ENCODE measurements at regions of chr5 and their contacts with region 1.

Region 1: DNA sequence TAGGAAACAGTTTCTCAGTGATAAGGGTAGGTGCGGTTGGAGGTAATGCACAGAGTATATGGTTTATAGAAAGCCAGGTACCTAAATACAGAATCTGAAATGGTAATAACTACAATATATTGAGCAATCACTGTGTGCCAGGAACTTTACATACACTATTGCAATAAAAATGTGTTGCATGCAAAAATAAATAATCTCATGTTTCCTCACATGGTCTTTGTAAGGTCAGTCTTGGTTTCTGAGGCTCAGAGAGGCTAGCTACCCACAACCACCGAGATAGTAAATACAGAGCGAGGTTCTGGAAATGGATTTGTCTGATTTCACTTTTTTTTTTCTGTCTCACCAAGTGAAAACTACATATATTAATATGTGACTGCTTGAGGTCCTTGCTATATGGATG is 128.9 kb downstream of the CAMK4 start:
- DNase-seq: no peak
- ATAC-seq: no peak
- H3K4me3 ChIP-seq: no peak overlapping the region
- H3K27ac ChIP-seq: no peak overlapping the region
- H3K4me1 ChIP-seq: no peaks in the 10 kb centered on the region
- H3K27me3 ChIP-seq: no peaks in the 10 kb centered on the region
- CTCF ChIP-seq: no peak
- EP300 ChIP-seq: no peak
- POLR2A ChIP-seq: no peak
- RAD21 ChIP-seq: no peak

Region 2: DNA sequence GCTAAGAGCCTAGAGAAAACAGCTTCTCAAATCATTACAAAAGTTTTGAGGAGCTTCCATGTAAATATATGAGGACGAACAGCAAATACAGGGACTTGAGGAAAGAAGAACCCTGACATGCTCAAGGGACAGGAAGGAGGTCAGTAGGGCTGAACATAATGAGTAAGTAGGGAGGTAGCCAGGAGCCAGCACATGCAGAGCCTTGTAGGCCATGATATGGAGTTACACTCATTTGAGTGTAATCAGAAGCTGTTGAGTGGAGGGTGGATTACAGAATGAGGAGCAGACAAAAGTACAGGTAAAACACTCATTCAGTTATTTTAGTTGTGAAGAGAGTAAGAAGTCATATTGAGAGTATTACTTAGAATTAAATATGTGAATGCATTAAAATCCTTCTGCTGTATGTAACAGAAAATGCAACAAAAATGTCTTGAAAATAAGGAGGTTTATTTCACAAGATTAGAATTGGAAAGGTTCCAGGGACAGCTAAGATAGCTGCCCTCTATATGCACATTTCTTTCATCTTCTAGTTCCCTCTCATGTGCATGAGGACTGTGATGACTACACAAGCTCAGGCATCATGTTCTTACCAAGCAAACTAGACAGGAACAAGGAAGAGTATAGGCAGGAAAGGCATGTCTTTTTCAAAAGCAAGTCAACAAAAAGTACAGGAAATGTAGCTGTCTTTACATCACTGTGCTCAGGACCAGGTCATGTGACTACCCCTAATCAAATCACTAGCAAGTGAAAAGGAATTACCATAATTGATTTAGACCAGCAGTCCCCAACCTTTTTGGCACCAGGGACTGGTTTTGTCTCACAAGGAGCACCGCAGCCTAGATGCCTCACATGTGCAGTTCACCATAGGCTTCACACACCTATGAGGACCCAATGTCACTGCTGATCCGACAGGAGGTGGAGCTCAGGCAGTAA is 713.8 kb before region 1 on chr5:
- CTCF ChIA-PET with region 1: no interaction called
- POLR2A ChIA-PET with region 1: no interaction called
- in situ Hi-C with region 1: no loop called
- intact Hi-C with region 1: no loop called
- DNase-seq: no peak
- ATAC-seq: no peak
- H3K4me3 ChIP-seq: no peak overlapping the region
- H3K27ac ChIP-seq: no peak overlapping the region
- H3K4me1 ChIP-seq: no peaks in the 10 kb centered on the region
- H3K27me3 ChIP-seq: no peaks in the 10 kb centered on the region; a peak in 1 of 5 replicates
- CTCF ChIP-seq: no peak
- EP300 ChIP-seq: no peak
- POLR2A ChIP-seq: no peak
- RAD21 ChIP-seq: no peak

Region 3: DNA sequence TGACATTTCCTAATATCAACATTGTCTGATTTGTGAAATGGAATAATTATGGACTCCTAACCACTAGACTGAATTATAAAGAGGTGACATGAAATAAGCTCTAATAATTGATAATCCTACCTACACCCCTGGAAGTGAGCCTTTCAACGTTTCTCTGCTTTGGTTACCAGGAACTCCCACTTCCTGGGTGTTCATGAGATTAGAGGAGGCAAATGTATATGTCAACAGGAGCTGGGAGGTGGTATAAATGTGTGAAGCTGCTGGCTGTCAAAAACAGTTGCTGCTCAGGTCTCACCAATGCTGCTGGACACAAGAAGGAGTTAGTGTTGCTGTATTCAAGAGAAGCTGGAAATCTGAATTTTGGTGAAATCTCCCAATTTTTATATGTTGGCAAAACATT is 32.1 kb before region 1 on chr5:
- CTCF ChIA-PET with region 1: no interaction called
- POLR2A ChIA-PET with region 1: no interaction called
- in situ Hi-C with region 1: no loop called
- intact Hi-C with region 1: loop called (anchors 1 kb)
- DNase-seq: no peak
- ATAC-seq: no peak
- H3K4me3 ChIP-seq: no peak overlapping the region
- H3K27ac ChIP-seq: no peak overlapping the region
- H3K4me1 ChIP-seq: no peaks in the 10 kb centered on the region
- H3K27me3 ChIP-seq: no peaks in the 10 kb centered on the region
- CTCF ChIP-seq: no peak
- EP300 ChIP-seq: no peak
- POLR2A ChIP-seq: no peak
- RAD21 ChIP-seq: no peak

Region 4: GRCh38 chr5:111364992-111365391 is 12.0 kb after region 1 on chr5:
- CTCF ChIA-PET with region 1: no interaction called
- POLR2A ChIA-PET with region 1: no interaction called
- in situ Hi-C with region 1: no loop called
- intact Hi-C with region 1: no loop called
- DNase-seq: no peak
- ATAC-seq: no peak
- H3K4me3 ChIP-seq: no peak overlapping the region
- H3K27ac ChIP-seq: no peak overlapping the region
- H3K4me1 ChIP-seq: no peaks in the 10 kb centered on the region
- H3K27me3 ChIP-seq: no peaks in the 10 kb centered on the region
- CTCF ChIP-seq: no peak
- EP300 ChIP-seq: no peak
- POLR2A ChIP-seq: no peak
- RAD21 ChIP-seq: no peak

Region 5: GRCh38 chr5:111641533-111642230 is 288.6 kb after region 1 on chr5:
- CTCF ChIA-PET with region 1: no interaction called
- POLR2A ChIA-PET with region 1: no interaction called
- in situ Hi-C with region 1: no loop called
- intact Hi-C with region 1: no loop called
- DNase-seq: no peak
- ATAC-seq: no peak
- H3K4me3 ChIP-seq: no peak overlapping the region
- H3K27ac ChIP-seq: no peak overlapping the region
- H3K4me1 ChIP-seq: peaks cover 35% of the 10 kb centered on the region
- H3K27me3 ChIP-seq: no peaks in the 10 kb centered on the region
- CTCF ChIP-seq: no peak
- EP300 ChIP-seq: no peak
- POLR2A ChIP-seq: no peak
- RAD21 ChIP-seq: no peak